ENCODE measurements at regions of chr9 and their contacts with region 1.

Region 1: GRCh38 chr9:98086461-98086860 is 29.9 kb downstream of the NANS start:
- DNase-seq: no peak
- ATAC-seq: no peak
- H3K4me3 ChIP-seq: no peak overlapping the region
- H3K27ac ChIP-seq: no peak overlapping the region
- H3K4me1 ChIP-seq: no peaks in the 10 kb centered on the region
- H3K27me3 ChIP-seq: no peaks in the 10 kb centered on the region
- CTCF ChIP-seq: no peak

Region 2: DNA sequence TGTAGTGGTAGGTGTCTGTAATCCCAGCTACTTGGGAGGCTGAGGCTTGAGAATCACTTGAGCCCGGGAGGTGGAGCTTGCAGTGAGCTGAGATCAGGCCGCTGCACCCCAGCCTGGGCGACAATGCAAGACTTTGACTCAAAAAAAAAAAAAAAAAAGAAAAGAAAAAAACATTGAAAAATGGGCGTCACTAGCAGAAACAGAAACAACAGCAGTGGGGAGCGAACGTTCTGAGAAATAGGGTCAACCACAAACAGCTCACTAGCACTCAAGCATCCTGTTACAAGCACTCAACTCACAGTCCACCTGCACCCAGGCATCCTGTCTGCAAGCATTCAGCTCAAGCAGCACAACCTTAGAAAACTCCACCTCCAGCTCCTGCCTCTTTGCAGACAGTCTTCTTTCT is 15.4 kb after region 1 on chr9:
- CTCF ChIA-PET with region 1: no interaction called
- POLR2A ChIA-PET with region 1: interaction called, 11 read pairs
- intact Hi-C with region 1: no loop called
- DNase-seq: no peak
- ATAC-seq: no peak
- H3K4me3 ChIP-seq: no peak overlapping the region
- H3K27ac ChIP-seq: no peak overlapping the region
- H3K4me1 ChIP-seq: no peaks in the 10 kb centered on the region
- H3K27me3 ChIP-seq: no peaks in the 10 kb centered on the region
- CTCF ChIP-seq: no peak

Region 3: GRCh38 chr9:98654247-98654646 is 567.8 kb after region 1 on chr9:
- CTCF ChIA-PET with region 1: no interaction called
- POLR2A ChIA-PET with region 1: no interaction called
- intact Hi-C with region 1: no loop called
- DNase-seq: peak; percentile 70
- ATAC-seq: peak; percentile 84
- H3K4me3 ChIP-seq: no peak overlapping the region
- H3K27ac ChIP-seq: peak overlapping the region; percentile 38
- H3K4me1 ChIP-seq: peaks cover 16% of the 10 kb centered on the region
- H3K27me3 ChIP-seq: no peaks in the 10 kb centered on the region; the same call in 1 of the 2 replicates
- CTCF ChIP-seq: no peak

Measured in PC-3 (cell line).